Aorta (tissue), 5 donors: ENCODE measurements at regions of chr7 and their contacts with region 1.

Region 1: GRCh38 chr7:2567679-2568278 is 9.0 kb downstream of the IQCE start:
- DNase-seq: peak in 1 of 2 donors; percentile 72
- ATAC-seq: peak; percentile 55
- H3K4me3 ChIP-seq: no peak overlapping the region
- H3K27ac ChIP-seq: no peak overlapping the region
- H3K4me1 ChIP-seq: no peaks in the 10 kb centered on the region
- H3K27me3 ChIP-seq: no peaks in the 10 kb centered on the region

Region 2: DNA sequence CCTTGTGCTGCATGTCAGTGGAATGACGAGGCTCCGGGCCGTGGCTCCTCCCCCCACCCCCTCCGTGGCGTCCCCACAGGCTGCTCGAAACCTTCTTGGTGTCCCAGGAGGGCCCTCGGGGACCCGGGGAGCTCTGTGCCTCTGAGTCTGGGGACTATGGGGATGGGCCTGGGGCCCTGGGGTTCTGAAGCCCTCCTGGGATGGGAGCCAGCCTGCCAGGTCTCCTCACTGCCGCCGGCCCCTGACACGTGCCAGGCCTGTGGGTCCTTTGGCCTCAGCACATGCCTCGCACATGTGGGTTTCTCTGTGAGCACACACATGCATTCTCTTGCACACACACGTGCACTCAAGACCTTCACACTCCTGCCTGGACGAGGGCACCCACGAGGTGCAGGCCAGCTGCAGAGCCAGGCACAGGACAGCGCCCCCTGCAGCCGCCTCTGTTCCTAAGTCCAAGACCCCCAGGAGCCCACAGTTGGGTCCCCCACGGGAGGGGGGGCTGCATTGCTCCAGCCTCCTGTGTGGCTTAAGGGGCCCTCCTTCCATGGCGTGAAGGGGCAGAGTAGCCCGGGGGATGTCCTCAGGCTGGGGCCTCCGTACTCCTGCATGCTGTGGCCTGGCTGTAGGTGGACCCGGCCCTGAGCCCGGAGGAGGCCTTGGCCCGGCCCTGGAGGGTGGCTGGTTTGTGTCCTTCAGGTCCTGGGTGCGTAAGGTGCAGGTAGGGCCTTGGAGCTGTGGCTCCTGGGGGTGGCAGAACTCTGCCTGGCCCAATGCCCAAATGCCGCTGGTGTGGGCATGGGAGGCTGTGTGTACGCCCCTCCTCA is 93.0 kb after region 1 on chr7:
- intact Hi-C with region 1: loop called in 1 of 2 experiments (anchors 10 kb)
- DNase-seq: peak; percentile 46 to 76
- ATAC-seq: no peak
- H3K4me3 ChIP-seq: no peak overlapping the region
- H3K27ac ChIP-seq: no peak overlapping the region
- H3K4me1 ChIP-seq: no peaks in the 10 kb centered on the region
- H3K27me3 ChIP-seq: no peaks in the 10 kb centered on the region